Activated CD8-positive, alpha-beta memory T cell treated with anti-CD3 and anti-CD28 coated beads, Interleukin-2, amount 10 ng/mL, durations not matched to agents 7 days and 5 days (primary cell): ENCODE measurements at regions of chr5 and their contacts with region 1.

Region 1: GRCh38 chr5:10627160-10627701 is 63.4 kb downstream of the ANKRD33B start:
- DNase-seq: no peak
- ATAC-seq: peak; percentile 12
- H3K4me3 Mint-ChIP-seq: peak overlapping the region; percentile 75
- H3K27ac Mint-ChIP-seq: peak overlapping the region; percentile 90
- H3K4me1 Mint-ChIP-seq: peaks cover 42% of the 10 kb centered on the region
- H3K27me3 Mint-ChIP-seq: peaks cover 2% of the 10 kb centered on the region

Region 2: GRCh38 chr5:10283927-10284635 is 343.1 kb before region 1 on chr5:
- CTCF ChIA-PET with region 1: interaction called, 11 read pairs
- DNase-seq: peak; percentile 87
- ATAC-seq: peak; percentile 100
- H3K4me3 Mint-ChIP-seq: no peak overlapping the region
- H3K27ac Mint-ChIP-seq: peak overlapping the region; percentile 54
- H3K4me1 Mint-ChIP-seq: peaks cover 19% of the 10 kb centered on the region
- H3K27me3 Mint-ChIP-seq: no peaks in the 10 kb centered on the region

Region 3: GRCh38 chr5:10441083-10441991 is 185.9 kb before region 1 on chr5 and contains the start of gene ROPN1L:
- CTCF ChIA-PET with region 1: interaction called, 26 read pairs
- DNase-seq: peak; percentile 84
- ATAC-seq: peak; percentile 98
- H3K4me3 Mint-ChIP-seq: peak within 1 kb of the TSS; percentile 79
- H3K27ac Mint-ChIP-seq: peak within 1 kb of the TSS; percentile 26
- H3K4me1 Mint-ChIP-seq: peaks cover 40% of the 10 kb centered on the region
- H3K27me3 Mint-ChIP-seq: peaks cover 12% of the 10 kb centered on the region
- total RNA-seq, gene ROPN1L: 1.1 to 2.4 TPM

Region 4: DNA sequence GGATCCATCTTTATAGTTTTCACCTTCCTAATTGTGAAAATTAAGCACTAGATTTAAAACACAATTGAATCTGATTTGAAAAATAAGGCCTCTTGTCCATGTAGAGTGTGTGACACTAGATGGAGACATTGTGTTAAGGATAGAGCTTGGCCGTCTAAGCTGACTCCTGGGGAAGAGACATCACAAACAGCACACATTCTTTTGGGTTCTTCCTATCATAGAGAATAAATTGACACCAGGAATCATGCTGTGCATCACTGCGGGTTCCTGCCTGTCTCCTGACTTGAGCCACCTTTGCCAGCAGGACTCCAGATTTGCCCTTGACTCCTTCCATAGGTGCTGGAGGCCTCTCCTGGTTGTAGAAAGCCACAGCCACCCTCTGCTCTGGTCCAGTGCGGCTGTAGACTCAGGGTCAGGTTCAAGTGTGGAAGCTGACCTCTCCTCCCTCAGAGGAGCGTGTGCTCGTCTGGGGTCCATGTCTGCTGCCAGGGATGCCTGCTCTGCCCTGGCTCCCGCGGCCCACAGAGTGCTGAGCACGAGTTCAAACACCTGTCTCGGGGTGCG is 174.4 kb before region 1 on chr5:
- CTCF ChIA-PET with region 1: interaction called, 77 read pairs
- DNase-seq: no peak
- ATAC-seq: peak; percentile 87
- H3K4me3 Mint-ChIP-seq: no peak overlapping the region
- H3K27ac Mint-ChIP-seq: peak overlapping the region; percentile 13
- H3K4me1 Mint-ChIP-seq: peaks cover 12% of the 10 kb centered on the region
- H3K27me3 Mint-ChIP-seq: no peaks in the 10 kb centered on the region

Region 5: DNA sequence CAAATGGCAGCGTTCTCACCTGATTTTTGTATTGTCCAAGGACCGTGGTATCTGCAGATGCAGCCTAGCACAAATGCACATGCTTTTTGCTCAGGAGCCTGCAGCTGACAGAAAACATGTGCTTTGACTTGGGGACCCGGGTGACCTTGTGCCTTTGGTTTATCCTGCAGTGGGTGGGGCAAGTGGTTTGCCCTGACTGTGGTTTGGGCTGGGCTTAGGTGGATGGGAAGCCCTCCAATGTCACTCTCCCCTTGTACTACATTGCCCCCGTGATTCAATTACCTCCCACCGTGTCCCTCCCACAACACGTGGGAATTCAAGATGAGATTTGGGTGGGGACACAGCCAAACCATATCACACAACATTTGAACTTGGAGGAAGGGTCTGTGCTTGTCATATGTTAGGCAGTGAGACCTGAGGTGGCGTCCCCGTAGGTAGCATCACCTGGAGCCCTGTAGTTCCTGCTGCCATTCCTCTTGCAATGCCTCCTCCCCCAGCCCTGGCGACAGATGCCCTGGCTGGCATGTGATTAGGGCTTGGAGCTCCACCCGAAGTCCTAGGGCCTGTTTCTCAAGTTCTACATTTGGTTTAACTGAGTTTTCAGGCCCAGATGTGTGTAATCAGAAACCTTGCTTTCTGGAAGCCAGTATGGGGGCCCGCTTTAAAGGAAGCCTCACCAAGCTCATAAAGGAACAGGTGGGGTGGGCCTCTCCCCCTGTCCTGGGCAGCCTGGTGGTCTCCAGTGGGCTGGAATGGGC is 61.3 kb before region 1 on chr5:
- CTCF ChIA-PET with region 1: interaction called, 15 read pairs
- DNase-seq: no peak
- ATAC-seq: no peak
- H3K4me3 Mint-ChIP-seq: peak overlapping the region; percentile 86
- H3K27ac Mint-ChIP-seq: no peak overlapping the region
- H3K4me1 Mint-ChIP-seq: peaks cover 29% of the 10 kb centered on the region
- H3K27me3 Mint-ChIP-seq: peaks cover 13% of the 10 kb centered on the region

Region 6: GRCh38 chr5:10611290-10611689 is 15.9 kb before region 1 on chr5:
- CTCF ChIA-PET with region 1: interaction called, 13 read pairs
- DNase-seq: peak; percentile 25
- ATAC-seq: no peak
- H3K4me3 Mint-ChIP-seq: no peak overlapping the region
- H3K27ac Mint-ChIP-seq: no peak overlapping the region
- H3K4me1 Mint-ChIP-seq: peaks cover 11% of the 10 kb centered on the region
- H3K27me3 Mint-ChIP-seq: peaks cover 2% of the 10 kb centered on the region

Region 7: GRCh38 chr5:10684303-10685086 is 57.3 kb after region 1 on chr5:
- CTCF ChIA-PET with region 1: interaction called, 13 read pairs
- DNase-seq: no peak
- ATAC-seq: no peak
- H3K4me3 Mint-ChIP-seq: no peak overlapping the region
- H3K27ac Mint-ChIP-seq: no peak overlapping the region
- H3K4me1 Mint-ChIP-seq: peaks cover 9% of the 10 kb centered on the region
- H3K27me3 Mint-ChIP-seq: no peaks in the 10 kb centered on the region